CD4-positive, alpha-beta T cell (primary cell): ENCODE measurements at regions of chr12 and their contacts with region 1.

Region 1: GRCh38 chr12:19186722-19187661 is 57.5 kb downstream of the PLEKHA5 start:
- DNase-seq: peak in 3 of 14 experiments; percentile 31 to 47 (median 43)
- ATAC-seq: no peak
- H3K4me3 ChIP-seq: no peak overlapping the region
- H3K4me3 Mint-ChIP-seq: no peak overlapping the region
- H3K27ac ChIP-seq: no peak overlapping the region
- H3K27ac Mint-ChIP-seq: no peak overlapping the region
- H3K4me1 ChIP-seq: no peaks in the 10 kb centered on the region
- H3K4me1 Mint-ChIP-seq: no peaks in the 10 kb centered on the region
- H3K27me3 ChIP-seq: no peaks in the 10 kb centered on the region
- H3K27me3 Mint-ChIP-seq: no peaks in the 10 kb centered on the region
- CTCF ChIP-seq: peak; percentile 57

Region 2: DNA sequence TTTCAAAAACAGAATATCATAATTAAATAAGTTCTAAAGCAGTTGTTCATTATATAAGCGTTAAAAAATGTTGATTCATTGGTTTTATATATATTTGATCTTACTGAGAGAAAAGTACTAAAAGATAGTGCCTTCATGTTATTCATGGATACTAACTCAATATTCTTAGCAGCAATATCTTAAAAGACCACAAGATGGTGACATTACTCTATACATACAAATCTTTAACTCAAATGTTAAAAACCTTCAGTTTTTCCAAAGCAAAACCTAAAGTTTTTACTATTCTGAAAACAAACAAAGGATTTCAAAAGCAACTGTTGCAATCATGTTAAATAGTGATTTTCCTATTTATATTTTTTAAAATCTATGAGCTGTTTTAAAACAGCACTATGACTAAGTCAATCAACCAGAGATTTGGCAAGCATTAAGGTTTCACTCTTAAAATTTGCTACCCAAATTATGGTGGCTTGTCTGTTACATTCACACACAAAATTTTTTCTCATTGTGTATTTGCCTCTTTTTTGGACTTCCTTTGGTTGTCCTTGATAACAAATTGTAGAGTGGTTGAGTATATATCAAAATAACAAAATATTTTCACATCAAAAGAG is 1046.9 kb before region 1 on chr12:
- CTCF ChIA-PET with region 1: no interaction called
- POLR2A ChIA-PET with region 1: no interaction called
- intact Hi-C with region 1: loop called (anchors 2 to 5 kb)
- DNase-seq: no peak
- ATAC-seq: no peak
- H3K4me3 ChIP-seq: no peak overlapping the region
- H3K4me3 Mint-ChIP-seq: no peak overlapping the region
- H3K27ac ChIP-seq: no peak overlapping the region
- H3K27ac Mint-ChIP-seq: no peak overlapping the region
- H3K4me1 ChIP-seq: no peaks in the 10 kb centered on the region
- H3K4me1 Mint-ChIP-seq: no peaks in the 10 kb centered on the region
- H3K27me3 ChIP-seq: no peaks in the 10 kb centered on the region
- H3K27me3 Mint-ChIP-seq: no peaks in the 10 kb centered on the region
- CTCF ChIP-seq: peak; percentile 13

Region 3: GRCh38 chr12:18160901-18161300 is 1026.1 kb before region 1 on chr12:
- CTCF ChIA-PET with region 1: no interaction called
- POLR2A ChIA-PET with region 1: no interaction called
- intact Hi-C with region 1: loop called in 1 of 2 experiments (anchors 5 kb)
- DNase-seq: no peak
- ATAC-seq: no peak
- H3K4me3 ChIP-seq: no peak overlapping the region
- H3K4me3 Mint-ChIP-seq: no peak overlapping the region
- H3K27ac ChIP-seq: no peak overlapping the region
- H3K27ac Mint-ChIP-seq: no peak overlapping the region
- H3K4me1 ChIP-seq: no peaks in the 10 kb centered on the region
- H3K4me1 Mint-ChIP-seq: peaks cover 9% of the 10 kb centered on the region
- H3K27me3 ChIP-seq: no peaks in the 10 kb centered on the region
- H3K27me3 Mint-ChIP-seq: no peaks in the 10 kb centered on the region
- CTCF ChIP-seq: no peak

Region 4: GRCh38 chr12:18250313-18250916 is 936.6 kb before region 1 on chr12:
- CTCF ChIA-PET with region 1: no interaction called
- POLR2A ChIA-PET with region 1: no interaction called
- intact Hi-C with region 1: loop called in 1 of 2 experiments (anchors 10 kb)
- DNase-seq: peak in 2 of 14 experiments; percentile 2 to 17
- ATAC-seq: no peak
- H3K4me3 ChIP-seq: no peak overlapping the region
- H3K4me3 Mint-ChIP-seq: no peak overlapping the region
- H3K27ac ChIP-seq: no peak overlapping the region
- H3K27ac Mint-ChIP-seq: no peak overlapping the region
- H3K4me1 ChIP-seq: no peaks in the 10 kb centered on the region
- H3K4me1 Mint-ChIP-seq: no peaks in the 10 kb centered on the region
- H3K27me3 ChIP-seq: no peaks in the 10 kb centered on the region
- H3K27me3 Mint-ChIP-seq: no peaks in the 10 kb centered on the region
- CTCF ChIP-seq: no peak

Region 5: DNA sequence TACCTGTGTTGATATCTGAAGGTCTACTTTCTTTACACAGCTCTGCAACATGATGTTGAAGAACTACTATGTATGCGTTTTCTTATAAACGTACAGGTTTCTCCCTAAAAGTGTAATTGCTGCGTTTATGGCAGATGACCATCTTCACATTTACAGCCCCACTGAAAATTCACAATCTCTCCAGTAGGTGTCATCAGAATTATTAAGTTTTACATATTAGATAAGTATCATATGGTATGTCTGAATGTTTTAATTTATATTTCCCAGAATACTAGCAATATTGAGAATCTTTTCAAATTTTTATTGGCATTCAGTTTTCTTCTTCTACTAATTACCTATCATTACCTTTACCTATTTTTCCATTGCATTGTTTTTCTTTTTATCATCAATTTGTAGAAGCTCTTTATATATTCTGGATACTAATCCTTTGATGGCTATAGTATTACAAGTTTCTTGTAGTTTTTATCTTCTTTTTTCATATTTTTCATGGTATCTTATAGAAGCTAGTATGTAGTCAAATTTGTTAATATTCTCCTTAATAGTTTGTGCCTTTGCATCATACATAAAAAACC is 325.6 kb before region 1 on chr12:
- CTCF ChIA-PET with region 1: no interaction called
- POLR2A ChIA-PET with region 1: no interaction called
- intact Hi-C with region 1: loop called (anchors 1 to 5 kb)
- DNase-seq: peak in 3 of 14 experiments; percentile 20 to 24 (median 20)
- ATAC-seq: no peak
- H3K4me3 ChIP-seq: no peak overlapping the region
- H3K4me3 Mint-ChIP-seq: no peak overlapping the region
- H3K27ac ChIP-seq: no peak overlapping the region
- H3K27ac Mint-ChIP-seq: no peak overlapping the region
- H3K4me1 ChIP-seq: no peaks in the 10 kb centered on the region
- H3K4me1 Mint-ChIP-seq: no peaks in the 10 kb centered on the region
- H3K27me3 ChIP-seq: no peaks in the 10 kb centered on the region
- H3K27me3 Mint-ChIP-seq: no peaks in the 10 kb centered on the region
- CTCF ChIP-seq: peak; percentile 42

Region 6: DNA sequence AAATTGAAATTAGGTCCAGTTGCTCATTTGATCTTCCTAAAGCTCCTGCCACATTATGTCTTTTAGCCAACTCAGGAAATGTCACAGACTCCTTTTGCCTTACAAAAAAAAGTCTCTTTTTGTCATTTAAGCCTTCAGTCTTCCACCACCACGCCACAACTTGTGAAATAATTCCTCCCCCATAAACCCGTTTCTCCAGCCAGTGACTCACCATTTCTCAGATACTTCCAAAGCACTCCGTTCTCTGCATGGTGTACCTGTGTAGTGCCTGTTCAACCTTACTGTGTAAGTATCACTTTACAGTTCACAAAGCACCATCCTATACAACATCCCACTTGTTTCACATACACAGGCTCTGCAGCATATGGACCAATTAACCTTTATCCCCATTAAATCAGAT is 112.8 kb after region 1 on chr12:
- CTCF ChIA-PET with region 1: no interaction called
- POLR2A ChIA-PET with region 1: no interaction called
- intact Hi-C with region 1: loop called in 1 of 2 experiments (anchors 10 kb)
- DNase-seq: no peak
- ATAC-seq: no peak
- H3K4me3 ChIP-seq: no peak overlapping the region
- H3K4me3 Mint-ChIP-seq: no peak overlapping the region
- H3K27ac ChIP-seq: no peak overlapping the region
- H3K27ac Mint-ChIP-seq: no peak overlapping the region
- H3K4me1 ChIP-seq: no peaks in the 10 kb centered on the region
- H3K4me1 Mint-ChIP-seq: no peaks in the 10 kb centered on the region
- H3K27me3 ChIP-seq: no peaks in the 10 kb centered on the region
- H3K27me3 Mint-ChIP-seq: no peaks in the 10 kb centered on the region
- CTCF ChIP-seq: no peak